SK-N-SH (cell line): ENCODE measurements at regions of chr7 and their contacts with region 1.

Region 1: GRCh38 chr7:1175967-1176851 is 16.2 kb upstream of the ZFAND2A start:
- DNase-seq: peak; percentile 93
- H3K4me3 ChIP-seq: peak overlapping the region; percentile 4 to 36; a peak in 2 of 4 replicates
- H3K27ac ChIP-seq: no peak overlapping the region
- H3K4me1 ChIP-seq: peaks cover 0 to 2% of the 10 kb centered on the region in 2 experiments; a peak in 1 of 4 replicates
- H3K27me3 ChIP-seq: no peaks in the 10 kb centered on the region
- CTCF ChIP-seq: peak; percentile 91
- EP300 ChIP-seq: no peak
- RAD21 ChIP-seq: peak; percentile 74

Region 2: GRCh38 chr7:936131-937054 is 239.8 kb before region 1 on chr7:
- CTCF ChIA-PET with region 1: no interaction called
- POLR2A ChIA-PET with region 1: no interaction called
- DNase-seq: no peak
- H3K4me3 ChIP-seq: no peak overlapping the region
- H3K27ac ChIP-seq: no peak overlapping the region
- H3K4me1 ChIP-seq: 0 out of 4 replicates have a peak, but pooled peaks cover 0 to 5% of the 10 kb centered on the region in 2 experiments
- H3K27me3 ChIP-seq: no peaks in the 10 kb centered on the region
- CTCF ChIP-seq: no peak
- EP300 ChIP-seq: no peak
- RAD21 ChIP-seq: no peak

Region 3: GRCh38 chr7:1151653-1152425 is 24.4 kb before region 1 on chr7:
- CTCF ChIA-PET with region 1: interaction called, 11 read pairs
- POLR2A ChIA-PET with region 1: no interaction called
- DNase-seq: no peak
- H3K4me3 ChIP-seq: no peak overlapping the region
- H3K27ac ChIP-seq: no peak overlapping the region
- H3K4me1 ChIP-seq: peaks cover 0 to 4% of the 10 kb centered on the region in 2 experiments; a peak in 2 of 4 replicates
- H3K27me3 ChIP-seq: no peaks in the 10 kb centered on the region
- CTCF ChIP-seq: no peak
- EP300 ChIP-seq: no peak
- RAD21 ChIP-seq: no peak

Region 4: DNA sequence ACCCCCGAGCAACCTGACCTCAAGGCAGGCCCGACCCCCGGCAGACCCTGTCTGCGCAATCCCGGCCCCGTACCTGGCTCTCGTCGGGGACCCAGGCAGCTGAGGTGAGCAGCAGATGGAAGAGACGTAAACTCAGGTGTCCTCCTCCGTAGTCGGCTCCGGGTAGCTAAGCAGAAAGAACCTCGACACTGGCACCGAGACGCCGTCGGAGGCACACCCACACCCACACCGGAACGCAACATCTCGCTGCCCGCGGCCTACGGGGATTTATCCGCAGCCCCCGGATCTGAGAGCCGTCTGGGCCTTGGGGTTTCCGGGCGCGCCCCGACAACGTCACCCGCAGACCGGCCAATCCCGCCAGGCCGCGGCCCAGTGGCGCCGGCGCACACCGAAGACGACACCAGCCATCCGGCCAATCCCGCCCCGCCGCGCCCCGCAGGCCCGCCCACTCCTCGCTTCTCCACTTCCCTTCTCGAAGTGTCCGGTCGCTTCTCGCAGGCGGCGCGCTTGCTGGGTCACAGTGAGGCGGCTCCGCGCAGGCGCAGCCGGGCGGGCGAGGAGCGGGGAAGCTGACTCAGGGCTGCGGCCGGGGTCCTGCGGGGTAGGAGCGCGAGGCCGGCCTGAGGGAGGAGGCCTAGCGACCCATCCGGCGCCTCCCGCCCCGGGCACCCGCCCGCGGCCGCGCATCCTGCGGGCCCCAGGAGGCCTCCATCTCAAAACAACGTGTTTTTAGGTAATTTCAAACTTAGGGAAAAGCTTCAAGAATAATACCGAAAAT is 16.1 kb before region 1 on chr7 and contains the start of gene ZFAND2A:
- CTCF ChIA-PET with region 1: interaction called, 31 read pairs
- POLR2A ChIA-PET with region 1: interaction called, 3 read pairs
- DNase-seq: peak; percentile 100
- H3K4me3 ChIP-seq: peak within 1 kb of the TSS; percentile 91 to 97
- H3K27ac ChIP-seq: peak within 1 kb of the TSS; percentile 81 to 94
- H3K4me1 ChIP-seq: peaks cover 14 to 16% of the 10 kb centered on the region in 2 experiments
- H3K27me3 ChIP-seq: no peaks in the 10 kb centered on the region
- CTCF ChIP-seq: no peak
- EP300 ChIP-seq: peak in 1 of 2 experiments; percentile 87; a peak in 2 of 4 replicates
- RAD21 ChIP-seq: no peak
- polyA plus RNA-seq, gene ZFAND2A: 38.9 and 48.5 TPM in 2 replicates

Region 5: DNA sequence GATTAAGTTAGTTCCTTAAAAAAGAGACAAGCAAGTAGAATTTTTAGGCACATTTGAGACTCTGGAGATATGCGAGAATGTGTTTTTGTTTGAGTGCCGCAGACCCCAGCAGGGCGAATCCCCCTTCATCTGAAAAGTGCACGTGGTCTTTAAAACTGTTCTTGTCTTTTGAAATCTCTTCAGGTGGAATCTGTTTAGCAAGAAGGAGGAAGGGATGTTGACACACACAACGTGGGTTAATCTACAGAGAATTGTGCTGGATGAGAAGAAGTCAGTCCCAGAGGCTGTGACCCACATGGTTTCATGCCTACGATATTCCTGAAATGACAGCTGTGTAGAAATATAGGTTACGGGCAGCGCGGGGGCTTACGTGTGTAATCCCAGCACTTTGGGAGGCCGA is 10.9 kb after region 1 on chr7:
- CTCF ChIA-PET with region 1: interaction called, 73 read pairs
- POLR2A ChIA-PET with region 1: no interaction called
- DNase-seq: no peak
- H3K4me3 ChIP-seq: no peak overlapping the region
- H3K27ac ChIP-seq: no peak overlapping the region
- H3K4me1 ChIP-seq: no peaks in the 10 kb centered on the region; a peak in 1 of 4 replicates
- H3K27me3 ChIP-seq: peaks cover 62% of the 10 kb centered on the region
- CTCF ChIP-seq: no peak
- EP300 ChIP-seq: no peak
- RAD21 ChIP-seq: no peak